PC-9 (cell line): ENCODE measurements at regions of chr3 and their contacts with region 1.

Region 1: GRCh38 chr3:162512488-162512887 is 1015.9 kb downstream of the OTOL1 start:
- DNase-seq: no peak
- H3K4me3 ChIP-seq: no peak overlapping the region
- H3K27ac ChIP-seq: no peak overlapping the region
- H3K4me1 ChIP-seq: no peaks in the 10 kb centered on the region
- H3K27me3 ChIP-seq: no peaks in the 10 kb centered on the region
- CTCF ChIP-seq: no peak

Region 2: DNA sequence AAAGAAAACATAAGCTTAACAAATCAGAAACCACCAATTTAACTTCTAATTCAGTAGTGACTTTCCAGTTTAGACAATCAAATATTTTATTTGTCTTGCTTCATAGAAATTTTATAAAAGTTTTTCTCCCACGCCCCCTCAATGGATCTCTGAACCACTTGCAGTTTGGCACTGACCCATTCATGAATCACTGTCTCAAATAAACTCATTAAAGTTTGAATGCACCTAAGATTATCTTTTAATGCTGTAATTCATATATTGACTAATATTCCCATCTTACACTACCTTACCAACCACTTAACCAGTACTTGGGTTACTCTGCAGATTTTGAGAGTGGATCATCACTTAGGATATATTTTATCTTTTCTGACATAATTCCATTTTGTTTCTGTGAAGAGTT is 135.7 kb before region 1 on chr3:
- CTCF ChIA-PET with region 1: no interaction called
- POLR2A ChIA-PET with region 1: interaction called, 11 read pairs
- intact Hi-C with region 1: no loop called
- DNase-seq: no peak
- H3K4me3 ChIP-seq: no peak overlapping the region
- H3K27ac ChIP-seq: no peak overlapping the region
- H3K4me1 ChIP-seq: no peaks in the 10 kb centered on the region
- H3K27me3 ChIP-seq: no peaks in the 10 kb centered on the region
- CTCF ChIP-seq: no peak

Region 3: GRCh38 chr3:162847511-162847910 is 335.0 kb after region 1 on chr3:
- CTCF ChIA-PET with region 1: no interaction called
- POLR2A ChIA-PET with region 1: no interaction called
- intact Hi-C with region 1: no loop called
- DNase-seq: no peak
- H3K4me3 ChIP-seq: no peak overlapping the region
- H3K27ac ChIP-seq: no peak overlapping the region
- H3K4me1 ChIP-seq: no peaks in the 10 kb centered on the region
- H3K27me3 ChIP-seq: no peaks in the 10 kb centered on the region
- CTCF ChIP-seq: no peak